Activated B cell treated with CpG ODN at 0.5 μM for 24 hours (primary cell): ENCODE measurements at regions of chr11 and their contacts with region 1.

Region 1: DNA sequence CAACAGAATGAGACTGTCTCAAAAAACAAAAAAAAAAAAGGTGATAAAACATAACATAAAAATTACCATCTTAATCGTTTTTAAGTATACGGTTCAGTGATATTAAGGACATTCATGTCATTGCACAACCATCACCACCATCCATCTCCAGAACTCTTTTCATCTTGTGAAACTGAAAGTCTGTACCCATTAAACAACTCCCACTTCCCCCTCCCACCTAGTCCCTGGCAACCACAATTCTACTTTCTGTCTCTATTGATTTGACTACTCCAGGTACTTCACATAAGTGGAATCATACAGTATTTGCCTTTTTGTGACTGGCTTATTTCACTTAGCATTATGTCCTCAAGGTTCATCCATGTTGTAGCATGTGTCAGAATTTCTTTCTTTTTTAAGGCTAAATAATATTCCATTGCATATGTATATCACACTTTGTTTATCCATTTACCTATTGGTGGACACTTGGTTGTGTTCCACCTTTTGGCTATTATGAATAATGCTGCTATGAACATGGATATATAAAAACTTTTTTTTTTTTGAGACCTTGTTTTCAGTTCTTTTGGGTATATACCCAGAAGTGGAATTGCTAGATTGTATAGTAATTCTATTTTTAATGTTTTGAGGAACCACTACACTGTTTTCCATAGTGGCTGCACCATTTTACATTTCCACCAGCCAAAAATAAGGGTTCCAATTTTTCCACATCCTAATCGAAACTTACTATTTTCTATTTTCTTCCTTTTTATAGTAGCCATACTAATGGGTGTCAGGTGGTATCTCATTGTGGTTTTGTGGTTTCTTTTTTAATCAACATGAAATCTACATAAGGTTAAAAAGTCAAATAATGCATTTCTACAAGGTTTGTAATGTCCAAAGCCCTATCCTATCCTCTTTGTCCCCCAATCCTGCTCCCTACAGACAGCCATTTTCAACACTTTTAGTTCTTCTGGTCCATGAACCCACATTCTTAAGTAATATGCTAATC is 23.4 kb upstream of the PIK3C2A start:
- DNase-seq: no peak
- ATAC-seq: peak; percentile 78
- H3K4me3 Mint-ChIP-seq: peak overlapping the region; percentile 29
- H3K27ac Mint-ChIP-seq: peak overlapping the region; percentile 11
- H3K4me1 Mint-ChIP-seq: peaks cover 16% of the 10 kb centered on the region
- H3K27me3 Mint-ChIP-seq: no peaks in the 10 kb centered on the region
- CTCF ChIP-seq: no peak

Region 2: DNA sequence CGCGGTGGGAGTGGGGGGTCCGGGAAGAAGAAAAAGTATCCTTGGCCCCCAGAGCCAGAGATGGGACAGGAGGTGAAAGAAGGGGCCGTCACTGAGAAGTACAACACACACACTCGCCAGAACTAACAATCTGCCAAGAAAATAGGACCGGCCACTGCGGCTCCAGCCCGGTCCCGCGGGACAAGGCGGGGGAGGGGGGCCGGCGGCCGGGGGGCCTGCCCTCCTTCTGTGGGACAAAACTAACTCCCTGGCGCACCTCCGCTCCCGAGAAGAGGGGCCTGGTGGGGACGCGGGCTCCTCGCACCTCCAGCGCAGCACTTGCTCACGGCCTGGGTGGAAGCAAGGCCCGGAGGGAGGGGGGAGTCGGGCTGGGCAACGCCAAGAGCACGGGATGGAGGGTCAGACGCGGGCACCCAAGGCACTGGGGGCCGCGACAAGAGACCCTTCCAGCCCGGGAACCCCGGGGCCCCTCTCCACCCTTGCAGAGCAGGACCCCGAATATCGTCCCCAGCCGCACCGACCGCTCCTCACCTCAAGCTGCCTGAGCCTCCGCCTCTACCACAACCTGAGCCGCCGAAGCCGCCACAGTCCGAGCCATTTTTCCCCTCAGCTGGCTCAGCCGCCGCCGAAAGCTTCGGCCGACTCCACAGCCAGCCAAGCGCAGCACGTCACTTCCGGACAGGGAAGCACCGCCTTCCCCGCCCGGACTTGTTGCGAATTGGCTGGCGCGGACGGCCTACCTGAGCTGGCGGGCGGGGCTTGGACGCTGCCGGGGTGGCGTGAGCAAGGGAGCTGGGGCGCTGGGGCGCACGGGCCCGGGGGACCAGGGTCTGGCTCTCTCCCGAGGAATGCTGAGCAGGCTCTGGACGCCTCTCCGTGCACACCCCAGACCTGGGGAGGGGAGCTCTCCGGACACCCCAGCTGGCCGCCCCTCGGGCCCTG is 23.6 kb before region 1 on chr11 and contains the start of gene PIK3C2A:
- CTCF ChIA-PET with region 1: interaction called, 8 read pairs
- POLR2A ChIA-PET with region 1: interaction called, 3 read pairs
- intact Hi-C with region 1: loop called (anchors 2 kb)
- DNase-seq: peak; percentile 91
- ATAC-seq: peak; percentile 95
- H3K4me3 Mint-ChIP-seq: peak within 1 kb of the TSS; percentile 99
- H3K27ac Mint-ChIP-seq: peak within 1 kb of the TSS; percentile 99
- H3K4me1 Mint-ChIP-seq: peaks cover 40% of the 10 kb centered on the region
- H3K27me3 Mint-ChIP-seq: no peaks in the 10 kb centered on the region
- CTCF ChIP-seq: no peak
- total RNA-seq, gene PIK3C2A: 35.9 and 41.2 TPM in 2 replicates

Region 3: GRCh38 chr11:17371614-17372013 is 140.5 kb after region 1 on chr11:
- CTCF ChIA-PET with region 1: no interaction called
- POLR2A ChIA-PET with region 1: no interaction called
- intact Hi-C with region 1: no loop called
- DNase-seq: no peak
- ATAC-seq: no peak
- H3K4me3 Mint-ChIP-seq: no peak overlapping the region
- H3K27ac Mint-ChIP-seq: no peak overlapping the region
- H3K4me1 Mint-ChIP-seq: no peaks in the 10 kb centered on the region
- H3K27me3 Mint-ChIP-seq: no peaks in the 10 kb centered on the region
- CTCF ChIP-seq: no peak

Region 4: GRCh38 chr11:17439316-17439782 is 208.2 kb after region 1 on chr11:
- CTCF ChIA-PET with region 1: no interaction called
- POLR2A ChIA-PET with region 1: no interaction called
- intact Hi-C with region 1: no loop called
- DNase-seq: no peak
- ATAC-seq: no peak
- H3K4me3 Mint-ChIP-seq: no peak overlapping the region
- H3K27ac Mint-ChIP-seq: no peak overlapping the region
- H3K4me1 Mint-ChIP-seq: no peaks in the 10 kb centered on the region
- H3K27me3 Mint-ChIP-seq: peaks cover 9% of the 10 kb centered on the region
- CTCF ChIP-seq: no peak

Region 5: DNA sequence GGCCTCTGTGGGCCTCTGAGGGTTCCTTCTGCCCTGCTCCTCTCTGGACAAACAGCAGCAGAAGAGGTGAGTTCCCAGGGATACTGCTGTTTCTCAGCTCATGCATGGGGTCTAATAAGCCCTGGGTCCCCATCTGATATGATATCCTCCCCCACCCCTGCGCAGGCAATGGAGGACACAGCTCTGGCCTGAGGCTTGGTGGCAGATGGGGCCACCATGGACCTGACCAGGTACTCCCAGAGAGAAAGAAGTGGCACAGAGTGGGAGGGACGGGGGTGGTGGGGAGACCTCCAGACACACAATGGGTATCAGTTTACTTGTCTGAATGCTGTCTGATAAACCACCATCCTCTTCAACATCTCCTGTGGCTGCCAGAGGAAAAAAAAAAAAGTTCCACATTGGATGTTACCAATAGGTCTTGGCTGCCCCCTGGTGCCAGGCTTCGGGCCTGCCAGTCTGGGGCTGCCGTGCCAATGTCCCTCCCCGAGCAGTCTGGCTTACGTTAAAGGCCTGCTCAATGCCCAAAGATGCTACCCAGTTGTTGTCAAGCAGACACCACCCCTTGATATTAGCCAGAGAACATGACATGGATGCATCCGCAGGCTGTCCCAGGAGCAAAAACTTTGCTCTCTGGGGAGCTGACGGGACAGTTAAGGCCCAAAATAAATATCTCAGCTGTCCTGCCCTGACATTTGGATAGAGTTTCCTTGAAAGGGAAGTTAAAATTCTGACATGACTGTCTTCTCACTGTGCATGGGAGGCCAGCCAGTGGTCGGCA is 273.4 kb after region 1 on chr11:
- CTCF ChIA-PET with region 1: interaction called, 3 read pairs
- POLR2A ChIA-PET with region 1: no interaction called
- intact Hi-C with region 1: loop called (anchors 1 kb)
- DNase-seq: peak; percentile 57
- ATAC-seq: peak; percentile 66
- H3K4me3 Mint-ChIP-seq: no peak overlapping the region
- H3K27ac Mint-ChIP-seq: no peak overlapping the region
- H3K4me1 Mint-ChIP-seq: no peaks in the 10 kb centered on the region
- H3K27me3 Mint-ChIP-seq: peaks cover 5% of the 10 kb centered on the region
- CTCF ChIP-seq: no peak

Region 6: DNA sequence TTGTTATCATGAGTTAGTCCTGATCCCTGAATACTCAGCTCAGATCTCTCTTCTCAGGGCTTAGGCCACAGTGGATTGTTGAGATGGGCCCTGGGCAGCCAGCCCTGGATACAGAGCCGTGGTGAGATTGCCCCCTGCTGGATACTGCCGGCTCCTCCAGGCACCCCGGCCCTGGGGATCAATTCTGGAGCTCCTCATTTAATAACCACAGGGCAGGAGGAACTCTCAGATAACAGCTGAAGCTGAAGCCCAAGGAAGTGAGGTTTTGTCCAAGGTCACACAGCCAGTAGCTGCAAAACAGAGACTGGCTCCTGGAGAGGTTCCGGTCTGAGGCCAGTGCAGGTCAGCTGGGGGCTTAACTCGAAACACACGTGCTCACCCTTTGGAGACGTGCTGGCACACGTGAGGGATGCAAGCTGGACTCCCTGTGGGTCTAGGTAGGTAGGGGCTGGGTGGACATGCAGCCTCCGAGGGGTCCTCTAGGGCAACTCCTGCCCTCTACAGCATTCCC is 297.1 kb after region 1 on chr11:
- CTCF ChIA-PET with region 1: interaction called, 8 read pairs
- POLR2A ChIA-PET with region 1: no interaction called
- intact Hi-C with region 1: loop called (anchors 1 kb)
- DNase-seq: no peak
- ATAC-seq: peak; percentile 70
- H3K4me3 Mint-ChIP-seq: no peak overlapping the region
- H3K27ac Mint-ChIP-seq: no peak overlapping the region
- H3K4me1 Mint-ChIP-seq: no peaks in the 10 kb centered on the region
- H3K27me3 Mint-ChIP-seq: no peaks in the 10 kb centered on the region
- CTCF ChIP-seq: no peak